Activated B cell treated with CpG ODN at 0.5 μM for 24 hours (primary cell): ENCODE measurements at regions of chr1 and their contacts with region 1.

Region 1: DNA sequence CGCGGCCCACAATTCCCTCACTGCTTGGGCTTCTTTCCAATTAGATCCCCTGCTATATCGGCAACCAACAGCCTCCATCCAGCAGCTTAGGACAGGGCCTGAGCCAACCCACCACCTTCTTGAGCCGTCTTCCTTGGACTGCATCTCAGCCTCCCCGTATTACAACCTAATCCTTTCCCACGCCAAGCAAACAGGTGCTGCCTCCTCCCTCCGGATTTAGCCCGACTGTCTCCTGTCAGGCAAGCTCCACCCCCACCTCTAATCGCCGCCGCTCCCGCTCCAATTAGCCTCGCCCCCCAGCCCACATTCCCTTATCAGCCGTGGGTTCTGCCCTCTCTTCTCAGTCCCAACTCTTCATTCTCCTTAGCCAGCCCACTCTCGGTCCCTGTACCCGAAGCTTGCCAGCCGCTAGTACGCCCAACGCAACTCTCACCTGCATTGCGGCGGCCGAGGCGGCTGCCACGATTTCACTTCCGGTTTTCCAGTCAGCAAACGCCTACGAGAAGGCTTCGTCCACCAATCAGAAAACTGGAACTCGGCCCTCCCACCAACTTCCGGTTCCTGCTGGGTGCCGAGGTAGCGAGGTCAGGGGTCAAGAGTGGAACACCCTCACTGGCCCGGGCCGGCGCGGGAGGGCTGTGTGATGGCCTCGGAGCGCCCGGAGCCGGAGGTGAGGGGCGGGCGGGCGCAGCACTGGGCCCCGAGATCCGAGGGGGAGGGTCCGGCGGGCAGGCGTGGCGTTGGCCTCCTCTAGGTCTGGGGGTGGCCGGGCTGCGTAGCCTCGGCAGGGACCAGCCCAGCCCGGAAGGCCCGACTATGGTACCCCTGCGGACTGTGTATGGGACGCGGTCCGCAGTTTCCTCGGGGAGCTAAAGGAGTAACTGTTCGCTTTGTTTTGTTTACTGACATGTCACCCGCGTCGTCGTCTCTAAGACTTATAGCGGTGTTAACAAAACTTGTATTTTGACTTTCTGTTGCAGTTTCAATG is at the starts of genes MED8 and SZT2:
- DNase-seq: peak; percentile 90
- ATAC-seq: peak; percentile 91
- H3K4me3 Mint-ChIP-seq: peak within 1 kb of the TSS; percentile 99
- H3K27ac Mint-ChIP-seq: peak within 1 kb of the TSS; percentile 91
- H3K4me1 Mint-ChIP-seq: peaks cover 38% of the 10 kb centered on the region
- H3K27me3 Mint-ChIP-seq: no peaks in the 10 kb centered on the region
- CTCF ChIP-seq: no peak
- total RNA-seq, gene MED8: 33.8 and 37.2 TPM in 2 replicates
- total RNA-seq, gene SZT2: 108 and 139 TPM in 2 replicates

Region 2: GRCh38 chr1:43348809-43349583 is 40.6 kb before region 1 on chr1:
- CTCF ChIA-PET with region 1: no interaction called
- POLR2A ChIA-PET with region 1: no interaction called
- intact Hi-C with region 1: loop called (anchors 2 kb)
- DNase-seq: peak; percentile 65
- ATAC-seq: peak; percentile 86
- H3K4me3 Mint-ChIP-seq: peak overlapping the region; percentile 85
- H3K27ac Mint-ChIP-seq: peak overlapping the region; percentile 88
- H3K4me1 Mint-ChIP-seq: peaks cover 11% of the 10 kb centered on the region
- H3K27me3 Mint-ChIP-seq: no peaks in the 10 kb centered on the region
- CTCF ChIP-seq: no peak

Region 3: DNA sequence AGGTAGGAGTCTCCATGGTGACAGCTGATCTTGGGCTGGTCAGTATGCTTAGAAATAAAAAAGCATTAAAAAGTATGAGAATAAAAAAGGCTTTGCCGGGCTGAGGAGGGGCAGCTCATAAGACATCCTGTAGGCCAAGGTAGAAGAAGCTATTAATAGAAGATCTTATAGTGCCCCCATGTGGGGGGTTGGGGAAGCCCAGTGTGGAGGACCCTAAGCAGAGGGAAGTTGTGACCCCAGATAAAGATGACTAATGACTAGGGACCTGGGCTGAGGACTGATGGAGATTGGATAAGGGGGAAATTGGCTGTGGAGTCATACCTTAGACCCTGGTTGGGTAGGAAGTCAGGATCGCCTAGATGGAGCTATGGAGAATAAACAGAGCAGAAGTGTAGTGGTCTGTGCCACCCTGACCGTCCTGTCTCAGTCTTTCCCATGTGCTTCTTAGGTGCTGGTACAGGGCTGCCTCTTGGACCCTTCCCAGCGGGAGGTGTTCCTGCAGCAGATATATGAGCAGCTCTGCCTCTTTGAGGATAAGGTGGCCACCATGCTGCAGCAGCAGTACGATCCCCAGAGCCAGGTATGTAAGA is 25.1 kb after region 1 on chr1:
- CTCF ChIA-PET with region 1: interaction called, 10 read pairs
- POLR2A ChIA-PET with region 1: no interaction called
- intact Hi-C with region 1: no loop called
- DNase-seq: peak; percentile 31
- ATAC-seq: peak; percentile 96
- H3K4me3 Mint-ChIP-seq: no peak overlapping the region
- H3K27ac Mint-ChIP-seq: no peak overlapping the region
- H3K4me1 Mint-ChIP-seq: no peaks in the 10 kb centered on the region
- H3K27me3 Mint-ChIP-seq: no peaks in the 10 kb centered on the region
- CTCF ChIP-seq: peak; percentile 19